Activated naive CD8-positive, alpha-beta T cell treated with anti-CD3 and anti-CD28 coated beads, Interleukin-2, amount 10 ng/mL, durations not matched to agents 7 days and 5 days (primary cell): ENCODE measurements at regions of chrX and their contacts with region 1.

Region 1: DNA sequence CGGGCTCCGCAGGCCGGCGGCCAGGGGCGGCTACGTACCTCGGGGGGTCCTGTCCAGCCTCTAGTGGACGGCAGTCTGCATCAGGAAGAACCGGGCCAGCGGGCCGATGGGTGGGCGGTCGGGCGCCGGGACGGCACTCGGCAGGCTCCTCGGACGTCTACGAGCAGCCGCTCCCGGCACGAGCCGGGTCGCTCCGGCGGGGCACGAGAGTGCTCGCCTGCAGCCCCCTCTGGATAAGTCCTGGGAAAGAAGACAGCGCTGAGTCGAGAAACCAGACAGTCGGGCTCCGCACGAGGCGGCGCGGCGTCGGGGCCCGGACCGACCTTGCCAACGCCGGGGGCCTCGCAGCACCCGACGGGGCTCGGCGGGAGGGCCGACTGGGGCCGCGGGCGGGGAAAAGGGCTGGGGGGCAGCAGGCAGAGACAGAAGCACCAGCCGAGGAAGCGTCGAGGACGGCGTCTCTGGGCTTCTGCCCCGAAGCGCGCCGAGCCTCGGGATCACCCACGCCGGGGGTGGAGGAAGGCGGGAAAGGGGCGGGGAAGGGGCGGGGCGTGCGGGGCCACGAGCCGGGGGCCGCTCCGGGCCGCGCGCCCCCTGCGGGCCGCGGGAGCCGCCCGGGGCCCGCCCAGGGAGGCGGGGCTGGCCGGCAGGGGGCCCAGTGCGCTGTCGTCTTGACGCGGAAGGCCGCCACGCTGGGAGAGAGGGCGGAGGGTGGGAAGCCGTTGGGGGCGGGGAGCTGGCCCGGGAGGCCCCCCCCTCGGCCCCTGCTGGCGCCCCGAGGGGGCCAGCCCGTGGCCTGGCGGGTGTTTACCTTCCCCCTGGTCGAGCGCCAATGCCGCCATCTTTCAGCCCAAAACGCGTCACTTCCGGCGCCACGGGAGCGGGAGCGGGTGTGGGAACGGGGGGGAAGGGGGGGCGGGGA is 1.9 kb downstream of the KLHL15 start:
- DNase-seq: peak; percentile 86
- ATAC-seq: peak; percentile 94
- H3K4me3 Mint-ChIP-seq: peak overlapping the region; percentile 96
- H3K27ac Mint-ChIP-seq: peak overlapping the region; percentile 86
- H3K4me1 Mint-ChIP-seq: peaks cover 11% of the 10 kb centered on the region
- H3K27me3 Mint-ChIP-seq: no peaks in the 10 kb centered on the region

Region 2: GRCh38 chrX:23907498-23908218 is 117.4 kb before region 1 on chrX and contains the starts of genes APOO and CXorf58:
- POLR2A ChIA-PET with region 1: interaction called, 15 read pairs
- DNase-seq: peak; percentile 91
- ATAC-seq: peak; percentile 96
- H3K4me3 Mint-ChIP-seq: peak within 1 kb of the TSS; percentile 84
- H3K27ac Mint-ChIP-seq: peak within 1 kb of the TSS; percentile 89
- H3K4me1 Mint-ChIP-seq: peaks cover 11% of the 10 kb centered on the region
- H3K27me3 Mint-ChIP-seq: no peaks in the 10 kb centered on the region
- total RNA-seq, gene APOO: 23.8 to 24.2 TPM
- total RNA-seq, gene CXorf58: not detected

Region 3: GRCh38 chrX:23952984-23953907 is 71.8 kb before region 1 on chrX:
- POLR2A ChIA-PET with region 1: interaction called, 14 read pairs
- DNase-seq: peak; percentile 53
- ATAC-seq: peak; percentile 93
- H3K4me3 Mint-ChIP-seq: peak overlapping the region; percentile 92
- H3K27ac Mint-ChIP-seq: peak overlapping the region; percentile 95
- H3K4me1 Mint-ChIP-seq: peaks cover 12% of the 10 kb centered on the region
- H3K27me3 Mint-ChIP-seq: no peaks in the 10 kb centered on the region

Region 4: GRCh38 chrX:23993012-23993633 is 32.0 kb before region 1 on chrX:
- POLR2A ChIA-PET with region 1: no interaction called
- DNase-seq: no peak
- ATAC-seq: no peak
- H3K4me3 Mint-ChIP-seq: no peak overlapping the region
- H3K27ac Mint-ChIP-seq: no peak overlapping the region
- H3K4me1 Mint-ChIP-seq: peaks cover 8% of the 10 kb centered on the region
- H3K27me3 Mint-ChIP-seq: no peaks in the 10 kb centered on the region

Region 5: DNA sequence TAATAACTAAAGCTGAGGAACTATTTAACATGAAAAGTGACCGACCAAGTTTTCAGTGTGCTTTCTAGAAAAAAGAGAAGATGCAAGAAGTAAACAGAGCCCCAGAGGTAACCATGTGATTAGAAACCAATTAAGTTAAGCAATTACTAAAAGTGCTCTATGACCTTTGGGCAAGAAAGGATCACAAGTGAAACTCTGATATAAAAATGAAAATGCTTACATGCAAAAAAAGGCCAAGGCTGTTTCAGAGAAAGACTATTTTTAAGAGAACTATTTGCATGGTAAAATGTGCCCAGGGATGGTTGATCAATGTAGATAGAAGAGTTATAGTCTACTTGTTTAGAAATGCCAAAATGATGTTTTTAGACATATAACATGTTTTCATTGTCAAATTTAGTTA is 20.1 kb before region 1 on chrX:
- POLR2A ChIA-PET with region 1: no interaction called
- DNase-seq: no peak
- ATAC-seq: no peak
- H3K4me3 Mint-ChIP-seq: no peak overlapping the region
- H3K27ac Mint-ChIP-seq: no peak overlapping the region
- H3K4me1 Mint-ChIP-seq: peaks cover 6% of the 10 kb centered on the region
- H3K27me3 Mint-ChIP-seq: no peaks in the 10 kb centered on the region

Region 6: GRCh38 chrX:24054182-24055042 is 29.3 kb after region 1 on chrX and contains the start of gene EIF2S3:
- POLR2A ChIA-PET with region 1: interaction called, 45 read pairs
- DNase-seq: peak; percentile 84
- ATAC-seq: peak; percentile 88
- H3K4me3 Mint-ChIP-seq: no peak within 1 kb of the TSS
- H3K27ac Mint-ChIP-seq: peak within 1 kb of the TSS; percentile 100
- H3K4me1 Mint-ChIP-seq: peaks cover 7% of the 10 kb centered on the region
- H3K27me3 Mint-ChIP-seq: no peaks in the 10 kb centered on the region
- total RNA-seq, gene EIF2S3: 194 to 199 TPM

Region 7: GRCh38 chrX:24069877-24070276 is 44.8 kb after region 1 on chrX:
- POLR2A ChIA-PET with region 1: no interaction called
- DNase-seq: no peak
- ATAC-seq: no peak
- H3K4me3 Mint-ChIP-seq: no peak overlapping the region
- H3K27ac Mint-ChIP-seq: no peak overlapping the region
- H3K4me1 Mint-ChIP-seq: peaks cover 4% of the 10 kb centered on the region
- H3K27me3 Mint-ChIP-seq: no peaks in the 10 kb centered on the region